ENCODE measurements at regions of chr6 and their contacts with region 1.

Region 1: DNA sequence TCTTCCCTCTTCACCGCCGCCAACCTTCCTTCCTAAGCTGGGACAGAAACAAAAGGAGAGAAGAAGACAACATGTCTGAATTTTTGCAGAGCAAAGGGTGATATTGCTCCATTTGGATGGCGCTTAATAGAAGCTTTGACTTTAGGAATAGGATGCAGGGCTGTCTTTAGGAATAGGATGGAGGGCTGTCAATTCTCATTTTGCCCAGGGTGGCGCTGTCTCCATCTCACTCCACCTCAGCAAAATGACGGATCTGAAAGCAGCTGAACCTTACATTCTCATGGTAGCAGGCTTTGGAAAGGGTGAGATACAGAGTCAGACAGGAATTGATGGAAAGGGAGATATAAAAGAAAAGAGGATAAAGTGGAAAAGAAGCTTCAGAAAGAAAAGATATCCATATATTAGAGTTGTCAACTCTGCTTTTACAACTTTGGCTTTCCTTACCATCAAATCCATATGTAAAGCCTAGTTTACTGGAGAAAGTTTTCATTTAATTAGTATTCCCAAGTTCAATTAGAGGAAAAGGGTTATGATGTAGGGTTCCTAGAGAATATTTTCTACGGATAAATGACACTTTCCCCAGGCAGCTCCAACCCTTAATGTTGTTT is 2.4 kb downstream of the MTCL3 start:
- DNase-seq: peak; percentile 68
- H3K4me3 Mint-ChIP-seq: peak overlapping the region; percentile 85
- H3K27ac Mint-ChIP-seq: peak overlapping the region; percentile 83
- H3K4me1 Mint-ChIP-seq: peaks cover 50% of the 10 kb centered on the region
- H3K27me3 Mint-ChIP-seq: peaks cover 8% of the 10 kb centered on the region

Region 2: DNA sequence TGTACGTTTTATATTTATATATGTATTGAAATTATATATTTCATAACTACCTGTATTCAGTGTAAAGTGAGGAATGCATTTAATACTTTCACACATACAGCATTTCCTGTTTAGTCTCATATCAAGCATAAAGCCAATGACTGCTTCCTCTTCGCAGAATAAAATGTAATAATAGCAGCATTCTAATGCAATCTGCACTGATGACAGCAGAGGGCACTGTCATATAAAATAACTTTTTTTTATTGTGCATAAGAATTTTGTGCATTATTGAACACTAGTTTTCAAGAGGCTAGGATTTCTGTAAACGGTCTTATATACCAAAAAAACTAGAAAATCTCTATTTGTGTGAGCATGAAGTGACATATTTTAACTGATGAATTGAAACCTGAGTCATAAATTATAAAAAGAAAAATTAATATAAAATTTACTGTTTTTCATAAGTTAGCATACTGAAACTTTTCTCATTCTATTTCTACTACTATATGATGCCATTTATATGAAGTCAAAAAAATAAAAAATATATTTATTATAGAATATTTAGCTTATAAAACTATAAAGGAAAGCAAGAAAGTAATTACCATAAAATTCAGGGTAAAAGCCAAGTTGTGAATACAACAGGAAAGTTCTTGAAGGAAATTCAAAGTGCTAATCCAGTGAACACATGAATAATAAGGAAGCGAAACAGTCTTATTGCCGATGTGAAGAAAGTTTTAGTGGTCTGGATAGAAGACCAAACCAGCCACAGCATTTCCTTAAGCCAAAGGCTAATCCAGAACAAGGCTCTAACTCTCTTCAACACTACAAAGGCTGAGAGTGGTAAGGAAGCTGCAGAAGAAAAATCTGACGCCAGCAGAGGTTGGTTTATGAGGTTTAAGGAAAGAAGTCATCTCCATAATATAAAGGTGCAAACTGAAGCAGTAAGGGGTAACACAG is 213.8 kb before region 1 on chr6:
- CTCF ChIA-PET with region 1: interaction called, 17 read pairs
- POLR2A ChIA-PET with region 1: no interaction called
- DNase-seq: peak; percentile 36
- H3K4me3 Mint-ChIP-seq: no peak overlapping the region
- H3K27ac Mint-ChIP-seq: no peak overlapping the region
- H3K4me1 Mint-ChIP-seq: peaks cover 7% of the 10 kb centered on the region
- H3K27me3 Mint-ChIP-seq: no peaks in the 10 kb centered on the region

Region 3: GRCh38 chr6:127420556-127420955 is 96.2 kb before region 1 on chr6:
- CTCF ChIA-PET with region 1: interaction called, 12 read pairs
- POLR2A ChIA-PET with region 1: no interaction called
- DNase-seq: peak; percentile 83
- H3K4me3 Mint-ChIP-seq: no peak overlapping the region
- H3K27ac Mint-ChIP-seq: peak overlapping the region; percentile 4
- H3K4me1 Mint-ChIP-seq: peaks cover 12% of the 10 kb centered on the region
- H3K27me3 Mint-ChIP-seq: no peaks in the 10 kb centered on the region

Region 4: DNA sequence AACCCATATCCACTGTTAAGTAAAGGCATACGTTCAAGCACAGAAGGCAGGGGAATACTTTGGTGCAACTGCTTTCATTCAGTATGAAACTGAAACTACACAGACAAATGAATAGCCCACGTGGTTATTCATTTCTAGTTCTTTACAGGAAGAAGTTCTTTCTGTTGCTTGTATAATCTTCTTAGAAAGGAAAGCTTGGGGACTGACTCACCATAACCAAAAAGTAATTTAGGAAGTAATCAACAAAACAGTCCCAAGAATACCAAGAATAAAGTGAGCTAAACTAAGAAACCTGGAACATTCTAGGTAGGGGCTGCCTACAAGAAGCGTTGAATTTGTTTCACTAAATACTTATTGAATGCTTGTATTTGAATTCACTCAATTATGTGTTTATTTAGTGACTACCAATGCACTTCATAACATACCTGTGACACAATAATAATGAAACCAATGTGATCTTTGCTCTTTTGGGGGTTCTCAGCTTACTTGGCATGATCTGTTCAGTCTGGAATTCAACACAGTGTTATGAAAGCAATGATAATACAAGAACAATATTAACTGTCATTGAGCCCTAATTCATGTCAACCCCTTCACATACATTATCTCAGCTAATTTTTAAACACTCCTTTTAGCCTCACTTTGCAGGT is 32.4 kb before region 1 on chr6:
- CTCF ChIA-PET with region 1: interaction called, 128 read pairs
- POLR2A ChIA-PET with region 1: interaction called, 69 read pairs
- DNase-seq: no peak
- H3K4me3 Mint-ChIP-seq: peak overlapping the region; percentile 64
- H3K27ac Mint-ChIP-seq: peak overlapping the region; percentile 87
- H3K4me1 Mint-ChIP-seq: peaks cover 32% of the 10 kb centered on the region
- H3K27me3 Mint-ChIP-seq: no peaks in the 10 kb centered on the region

Region 5: GRCh38 chr6:127503022-127503421 is 13.7 kb before region 1 on chr6:
- CTCF ChIA-PET with region 1: interaction called, 61 read pairs
- POLR2A ChIA-PET with region 1: interaction called, 11 read pairs
- DNase-seq: no peak
- H3K4me3 Mint-ChIP-seq: no peak overlapping the region
- H3K27ac Mint-ChIP-seq: no peak overlapping the region
- H3K4me1 Mint-ChIP-seq: peaks cover 2% of the 10 kb centered on the region
- H3K27me3 Mint-ChIP-seq: no peaks in the 10 kb centered on the region

Region 6: GRCh38 chr6:127539272-127539671 is 22.5 kb after region 1 on chr6:
- CTCF ChIA-PET with region 1: interaction called, 76 read pairs
- POLR2A ChIA-PET with region 1: interaction called, 6 read pairs
- DNase-seq: no peak
- H3K4me3 Mint-ChIP-seq: no peak overlapping the region
- H3K27ac Mint-ChIP-seq: no peak overlapping the region
- H3K4me1 Mint-ChIP-seq: peaks cover 5% of the 10 kb centered on the region
- H3K27me3 Mint-ChIP-seq: peaks cover 19% of the 10 kb centered on the region